Posterior vena cava (tissue), 2 donors: ENCODE measurements at regions of chr4 and their contacts with region 1.

Region 1: DNA sequence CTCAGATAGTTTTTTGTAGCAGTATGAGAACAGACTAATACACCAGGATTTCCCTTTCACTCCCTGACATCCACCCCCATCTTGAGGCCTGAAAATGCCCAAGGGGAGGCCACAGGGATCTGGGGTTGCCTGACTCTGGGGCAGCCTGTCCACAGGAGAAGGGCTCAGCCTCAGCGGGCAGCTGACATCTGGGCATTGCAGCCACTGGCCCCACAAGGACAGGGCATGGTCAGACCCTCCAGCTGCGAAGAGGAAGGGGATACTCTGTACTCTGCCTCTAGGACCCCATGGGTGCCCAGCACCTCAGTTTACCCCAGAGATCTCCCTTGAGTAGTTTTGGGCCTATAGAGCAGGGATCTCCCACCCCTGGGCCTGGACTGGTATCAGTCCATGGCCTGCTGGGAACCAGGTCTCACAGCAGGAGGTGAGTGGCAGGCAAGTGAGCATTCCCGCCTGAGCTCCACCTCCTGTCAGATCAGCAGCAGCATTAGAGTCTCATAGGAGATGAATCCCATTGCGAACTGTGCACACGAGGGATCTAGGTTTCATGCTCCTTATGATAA is 138.9 kb downstream of the HMX1 start:
- DNase-seq: peak; percentile 30

Region 2: GRCh38 chr4:8745005-8745790 is 12.4 kb after region 1 on chr4:
- intact Hi-C with region 1: loop called in 1 of 2 experiments (anchors 1 kb)
- DNase-seq: peak; percentile 72